B cell (primary cell): ENCODE measurements at regions of chr2 and their contacts with region 1.

Region 1: GRCh38 chr2:201263779-201264178 is 3.4 kb downstream of the CASP8 start:
- DNase-seq: no peak
- ATAC-seq: no peak
- H3K4me3 ChIP-seq: no peak overlapping the region
- H3K4me3 Mint-ChIP-seq: peak overlapping the region; percentile 46
- H3K27ac ChIP-seq: peak overlapping the region in 1 of 2 donors; percentile 37
- H3K27ac Mint-ChIP-seq: peak overlapping the region; percentile 37
- H3K4me1 ChIP-seq: peaks cover 51 to 53% of the 10 kb centered on the region in 2 donors
- H3K4me1 Mint-ChIP-seq: peaks cover 73% of the 10 kb centered on the region
- H3K27me3 ChIP-seq: no peaks in the 10 kb centered on the region
- H3K27me3 Mint-ChIP-seq: no peaks in the 10 kb centered on the region
- CTCF ChIP-seq: no peak

Region 2: GRCh38 chr2:201242571-201243277 is 21.1 kb before region 1 on chr2:
- CTCF ChIA-PET with region 1: interaction called, 65 read pairs
- POLR2A ChIA-PET with region 1: no interaction called
- intact Hi-C with region 1: no loop called
- DNase-seq: no peak
- ATAC-seq: no peak
- H3K4me3 ChIP-seq: peak overlapping the region in 1 of 5 experiments; percentile 33
- H3K4me3 Mint-ChIP-seq: peak overlapping the region; percentile 14
- H3K27ac ChIP-seq: peak overlapping the region; percentile 27 to 42
- H3K27ac Mint-ChIP-seq: peak overlapping the region; percentile 46
- H3K4me1 ChIP-seq: peaks cover 47 to 48% of the 10 kb centered on the region in 2 donors
- H3K4me1 Mint-ChIP-seq: peaks cover 74% of the 10 kb centered on the region
- H3K27me3 ChIP-seq: no peaks in the 10 kb centered on the region
- H3K27me3 Mint-ChIP-seq: no peaks in the 10 kb centered on the region
- CTCF ChIP-seq: no peak